ENCODE measurements at regions of chrX and their contacts with region 1.

Region 1: DNA sequence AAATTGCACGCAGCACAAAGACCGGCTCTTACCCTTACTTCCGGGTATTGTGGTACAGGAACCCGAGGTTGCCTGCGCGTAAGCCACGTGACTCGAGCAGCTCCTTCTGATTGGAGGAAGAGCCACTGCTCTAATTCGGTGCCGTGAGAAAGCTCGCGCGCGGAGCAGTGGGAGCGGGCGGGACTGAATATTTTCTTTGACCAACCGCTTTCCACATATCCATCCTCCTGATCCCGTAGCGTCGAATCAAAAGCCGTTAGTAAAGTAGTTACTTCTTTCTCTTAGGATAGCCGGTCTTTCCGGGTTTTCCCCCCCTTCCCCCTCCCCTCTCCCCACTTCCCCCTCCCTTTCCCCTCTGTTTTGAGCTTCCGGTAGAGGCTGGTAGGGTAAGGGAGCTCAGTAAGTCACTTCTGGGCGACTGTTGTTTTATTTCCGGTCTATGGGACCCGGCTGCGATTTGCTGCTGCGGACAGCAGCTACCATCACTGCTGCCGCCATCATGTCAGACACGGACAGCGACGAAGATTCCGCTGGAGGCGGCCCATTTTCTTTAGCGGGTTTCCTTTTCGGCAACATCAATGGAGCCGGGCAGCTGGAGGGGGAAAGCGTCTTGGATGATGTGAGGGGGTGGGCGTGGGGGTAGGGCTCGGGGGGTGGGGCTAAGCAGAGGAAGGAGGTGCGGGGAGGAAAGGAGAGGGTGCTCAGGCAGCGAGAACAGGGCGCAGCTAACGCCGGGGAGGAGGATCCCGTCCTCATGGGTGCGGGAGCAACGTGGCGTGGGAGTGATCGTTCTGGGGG is at the start of gene TAF1:
- DNase-seq: peak; percentile 95
- H3K4me3 ChIP-seq: peak within 1 kb of the TSS; percentile 64 to 76 (median 64)
- H3K27ac ChIP-seq: peak within 1 kb of the TSS; percentile 87
- H3K4me1 ChIP-seq: no peaks in the 10 kb centered on the region
- H3K27me3 ChIP-seq: no peaks in the 10 kb centered on the region
- CTCF ChIP-seq: no peak
- total RNA-seq, gene TAF1: 19.0 to 35.6 TPM

Region 2: GRCh38 chrX:71254092-71254941 is 111.8 kb before region 1 on chrX and contains the start of gene ZMYM3:
- CTCF ChIA-PET with region 1: no interaction called
- dilution Hi-C with region 1: no loop called
- in situ Hi-C with region 1: no loop called
- intact Hi-C with region 1: loop called (anchors 1 kb)
- DNase-seq: peak; percentile 77
- H3K4me3 ChIP-seq: peak within 1 kb of the TSS; percentile 54 to 76 (median 60)
- H3K27ac ChIP-seq: no peak within 1 kb of the TSS
- H3K4me1 ChIP-seq: peaks cover 4% of the 10 kb centered on the region
- H3K27me3 ChIP-seq: no peaks in the 10 kb centered on the region
- CTCF ChIP-seq: no peak
- total RNA-seq, gene ZMYM3: 14.7 to 15.4 TPM

Region 3: GRCh38 chrX:71283403-71284143 is 82.5 kb before region 1 on chrX and contains the start of gene NONO:
- CTCF ChIA-PET with region 1: interaction called, 3 read pairs
- dilution Hi-C with region 1: no loop called
- in situ Hi-C with region 1: no loop called
- intact Hi-C with region 1: loop called (anchors 1 kb)
- DNase-seq: peak; percentile 97
- H3K4me3 ChIP-seq: peak within 1 kb of the TSS; percentile 60 to 78 (median 77)
- H3K27ac ChIP-seq: peak within 1 kb of the TSS; percentile 88
- H3K4me1 ChIP-seq: peaks cover 2% of the 10 kb centered on the region
- H3K27me3 ChIP-seq: no peaks in the 10 kb centered on the region
- CTCF ChIP-seq: peak in 1 of 2 donors; percentile 27
- total RNA-seq, gene NONO: 274 to 294 TPM

Region 4: GRCh38 chrX:71532753-71533425 is 166.8 kb after region 1 on chrX and contains the start of gene OGT:
- CTCF ChIA-PET with region 1: no interaction called
- dilution Hi-C with region 1: no loop called
- in situ Hi-C with region 1: no loop called
- intact Hi-C with region 1: loop called (anchors 1 kb)
- DNase-seq: peak; percentile 91
- H3K4me3 ChIP-seq: peak within 1 kb of the TSS; percentile 60 to 67 (median 66)
- H3K27ac ChIP-seq: peak within 1 kb of the TSS; percentile 71
- H3K4me1 ChIP-seq: peaks cover 5% of the 10 kb centered on the region
- H3K27me3 ChIP-seq: no peaks in the 10 kb centered on the region
- CTCF ChIP-seq: no peak
- total RNA-seq, gene OGT: 180 to 217 TPM

Region 5: GRCh38 chrX:72714476-72714916 is 1348.4 kb after region 1 on chrX:
- CTCF ChIA-PET with region 1: no interaction called
- dilution Hi-C with region 1: no loop called
- in situ Hi-C with region 1: no loop called
- intact Hi-C with region 1: no loop called
- DNase-seq: peak; percentile 51
- H3K4me3 ChIP-seq: peak overlapping the region; percentile 48 to 59 (median 57)
- H3K27ac ChIP-seq: peak overlapping the region; percentile 29
- H3K4me1 ChIP-seq: no peaks in the 10 kb centered on the region
- H3K27me3 ChIP-seq: no peaks in the 10 kb centered on the region
- CTCF ChIP-seq: no peak